Mammary epithelial cell (primary cell): ENCODE measurements at regions of chr16 and their contacts with region 1.

Region 1: DNA sequence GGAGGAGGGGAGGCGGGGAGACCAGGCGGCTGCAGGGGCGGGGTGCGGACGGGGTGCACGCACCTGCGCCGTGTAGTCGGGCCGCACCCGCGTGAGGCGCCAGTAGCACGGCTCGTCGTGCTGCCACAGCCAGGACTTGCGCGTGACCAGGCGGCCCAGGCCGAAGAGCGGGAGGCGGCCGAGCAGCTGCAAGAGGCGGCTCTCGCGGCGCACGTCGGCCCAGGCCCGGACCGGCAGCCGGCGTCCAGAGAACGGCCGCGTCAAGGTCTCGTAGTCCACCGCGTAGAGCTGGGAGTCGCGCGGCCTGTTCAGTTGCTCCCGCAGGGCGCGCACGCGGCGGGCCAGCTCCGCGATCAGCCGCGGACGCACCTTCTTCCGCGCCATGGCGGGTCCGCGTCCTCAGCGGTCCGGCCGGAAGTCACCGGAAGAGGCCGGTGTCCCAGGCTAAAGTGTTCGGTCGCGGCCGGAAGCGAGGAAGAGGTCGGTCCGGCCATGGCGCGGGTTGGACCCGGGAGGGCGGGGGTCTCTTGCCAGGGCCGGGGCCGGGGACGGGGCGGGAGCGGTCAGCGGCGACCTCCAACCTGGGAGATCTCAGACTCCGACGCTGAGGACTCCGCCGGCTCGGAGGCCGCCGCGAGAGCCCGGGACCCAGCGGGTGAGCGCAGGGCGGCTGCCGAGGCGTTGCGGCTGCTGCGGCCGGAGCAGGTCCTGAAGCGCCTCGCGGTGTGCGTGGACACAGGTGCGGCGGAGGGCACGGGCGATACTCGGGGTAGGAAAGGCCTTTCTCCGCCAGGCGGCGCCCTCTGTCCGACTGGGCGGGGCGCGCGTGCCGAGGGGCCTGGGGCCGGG is at the starts of genes EME2 and MRPS34:
- DNase-seq: peak; percentile 83
- H3K4me3 ChIP-seq: peak within 1 kb of the TSS; percentile 69 to 82 (median 70)
- H3K27ac ChIP-seq: peak within 1 kb of the TSS; percentile 3
- H3K4me1 ChIP-seq: peaks cover 31% of the 10 kb centered on the region
- H3K27me3 ChIP-seq: no peaks in the 10 kb centered on the region
- CTCF ChIP-seq: peak; percentile 45 to 77
- total RNA-seq, gene EME2: 17.2 to 29.0 TPM
- total RNA-seq, gene MRPS34: 34.7 to 99.4 TPM

Region 2: GRCh38 chr16:1428511-1428910 is 344.4 kb before region 1 on chr16:
- CTCF ChIA-PET with region 1: no interaction called
- dilution Hi-C with region 1: no loop called
- in situ Hi-C with region 1: no loop called
- intact Hi-C with region 1: loop called (anchors 5 kb)
- DNase-seq: no peak
- H3K4me3 ChIP-seq: peak overlapping the region; percentile 27 to 63 (median 43)
- H3K27ac ChIP-seq: no peak overlapping the region
- H3K4me1 ChIP-seq: peaks cover 25% of the 10 kb centered on the region
- H3K27me3 ChIP-seq: no peaks in the 10 kb centered on the region
- CTCF ChIP-seq: peak; percentile 52 to 81

Region 3: DNA sequence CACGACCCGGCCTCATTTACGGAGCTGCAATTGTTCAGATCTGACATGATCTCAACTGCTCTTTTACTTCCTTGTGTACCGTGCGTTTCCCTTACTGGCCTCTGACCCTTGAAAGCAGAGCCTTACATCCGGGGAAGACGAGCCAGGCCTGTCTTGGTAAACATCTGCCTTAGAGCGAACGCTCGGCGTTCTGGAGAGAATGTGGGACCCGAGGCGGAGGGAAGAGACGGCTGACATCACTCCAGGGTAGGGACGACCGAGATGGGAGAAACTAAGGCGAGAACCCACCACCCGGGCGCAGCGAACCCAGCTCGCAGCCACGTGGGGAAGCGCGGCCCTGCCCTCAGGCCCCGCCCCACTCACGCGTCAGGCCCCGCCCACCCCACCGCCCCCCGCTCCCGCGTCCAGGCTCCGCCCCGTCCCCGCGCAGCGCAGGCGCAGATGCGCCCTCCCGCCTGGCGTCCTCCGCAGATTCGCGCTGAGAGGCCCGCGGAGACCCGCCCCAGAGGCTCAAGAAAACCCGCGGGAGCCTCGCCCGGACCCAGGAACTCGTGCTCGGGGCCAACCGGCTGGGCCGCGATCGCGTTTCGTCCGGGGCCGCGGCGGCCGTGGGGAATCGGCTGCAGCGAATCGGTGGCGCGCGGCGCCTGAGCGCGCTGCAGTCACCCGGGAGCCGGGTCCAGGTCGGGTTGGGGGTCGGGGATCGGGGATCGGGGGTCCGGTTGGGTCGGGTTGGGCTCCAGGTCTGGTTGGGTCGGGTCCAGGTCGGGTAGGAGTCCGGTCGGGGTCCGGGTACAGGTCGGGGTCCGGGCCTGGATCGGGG is 279.8 kb before region 1 on chr16 and contains the start of gene TELO2:
- CTCF ChIA-PET with region 1: no interaction called
- dilution Hi-C with region 1: no loop called
- in situ Hi-C with region 1: no loop called
- intact Hi-C with region 1: loop called (anchors 5 kb)
- DNase-seq: peak; percentile 72
- H3K4me3 ChIP-seq: peak within 1 kb of the TSS; percentile 77 to 84 (median 82)
- H3K27ac ChIP-seq: peak within 1 kb of the TSS; percentile 41
- H3K4me1 ChIP-seq: peaks cover 21% of the 10 kb centered on the region
- H3K27me3 ChIP-seq: no peaks in the 10 kb centered on the region
- CTCF ChIP-seq: no peak
- total RNA-seq, gene TELO2: 12.7 to 37.7 TPM

Region 4: DNA sequence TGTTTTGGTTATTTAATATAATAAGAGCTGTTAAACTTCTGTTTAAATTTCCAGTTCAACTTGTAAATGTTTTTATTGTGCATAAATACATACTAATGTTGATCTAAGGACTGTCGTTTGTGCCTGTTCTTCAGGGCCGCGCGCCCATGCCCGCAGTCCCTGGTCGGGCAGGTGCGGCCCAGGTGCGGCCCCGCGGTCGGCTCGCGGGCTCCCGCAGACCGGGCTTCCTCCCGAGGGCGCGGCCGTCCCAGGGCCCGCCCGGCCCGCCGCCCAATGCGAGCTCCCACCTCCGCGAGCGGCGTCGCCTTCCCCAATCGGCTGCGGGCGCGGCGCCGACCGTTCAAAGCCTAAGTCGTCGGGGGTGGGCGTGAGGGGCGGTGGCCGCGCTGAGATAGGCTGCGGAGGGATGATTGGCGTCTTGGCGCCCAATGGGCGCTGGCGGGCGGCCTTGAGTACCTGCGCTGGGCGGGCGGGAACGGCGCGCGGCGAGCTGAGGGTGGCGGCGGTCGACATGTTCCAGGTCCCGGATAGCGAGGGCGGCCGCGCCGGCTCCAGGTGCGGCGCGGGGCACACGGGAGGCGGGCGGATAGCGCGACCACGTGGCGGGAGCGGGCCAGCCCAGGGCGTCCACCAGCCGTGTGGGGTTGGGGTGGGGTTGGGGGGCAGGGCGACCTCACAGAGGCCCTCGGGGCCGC is 95.0 kb before region 1 on chr16 and contains the start of gene JPT2:
- CTCF ChIA-PET with region 1: no interaction called
- dilution Hi-C with region 1: no loop called
- in situ Hi-C with region 1: no loop called
- intact Hi-C with region 1: loop called (anchors 2 kb)
- DNase-seq: peak; percentile 98
- H3K4me3 ChIP-seq: peak within 1 kb of the TSS; percentile 79 to 97 (median 97)
- H3K27ac ChIP-seq: peak within 1 kb of the TSS; percentile 88
- H3K4me1 ChIP-seq: peaks cover 33% of the 10 kb centered on the region
- H3K27me3 ChIP-seq: no peaks in the 10 kb centered on the region
- CTCF ChIP-seq: no peak
- total RNA-seq, gene JPT2: 53.0 to 117 TPM

Region 5: GRCh38 chr16:1691276-1691675 is 81.7 kb before region 1 on chr16:
- CTCF ChIA-PET with region 1: no interaction called
- dilution Hi-C with region 1: no loop called
- in situ Hi-C with region 1: no loop called
- intact Hi-C with region 1: loop called (anchors 5 kb)
- DNase-seq: peak; percentile 75
- H3K4me3 ChIP-seq: no peak overlapping the region
- H3K27ac ChIP-seq: peak overlapping the region; percentile 97
- H3K4me1 ChIP-seq: peaks cover 56% of the 10 kb centered on the region
- H3K27me3 ChIP-seq: no peaks in the 10 kb centered on the region
- CTCF ChIP-seq: peak; percentile 19 to 48

Region 6: DNA sequence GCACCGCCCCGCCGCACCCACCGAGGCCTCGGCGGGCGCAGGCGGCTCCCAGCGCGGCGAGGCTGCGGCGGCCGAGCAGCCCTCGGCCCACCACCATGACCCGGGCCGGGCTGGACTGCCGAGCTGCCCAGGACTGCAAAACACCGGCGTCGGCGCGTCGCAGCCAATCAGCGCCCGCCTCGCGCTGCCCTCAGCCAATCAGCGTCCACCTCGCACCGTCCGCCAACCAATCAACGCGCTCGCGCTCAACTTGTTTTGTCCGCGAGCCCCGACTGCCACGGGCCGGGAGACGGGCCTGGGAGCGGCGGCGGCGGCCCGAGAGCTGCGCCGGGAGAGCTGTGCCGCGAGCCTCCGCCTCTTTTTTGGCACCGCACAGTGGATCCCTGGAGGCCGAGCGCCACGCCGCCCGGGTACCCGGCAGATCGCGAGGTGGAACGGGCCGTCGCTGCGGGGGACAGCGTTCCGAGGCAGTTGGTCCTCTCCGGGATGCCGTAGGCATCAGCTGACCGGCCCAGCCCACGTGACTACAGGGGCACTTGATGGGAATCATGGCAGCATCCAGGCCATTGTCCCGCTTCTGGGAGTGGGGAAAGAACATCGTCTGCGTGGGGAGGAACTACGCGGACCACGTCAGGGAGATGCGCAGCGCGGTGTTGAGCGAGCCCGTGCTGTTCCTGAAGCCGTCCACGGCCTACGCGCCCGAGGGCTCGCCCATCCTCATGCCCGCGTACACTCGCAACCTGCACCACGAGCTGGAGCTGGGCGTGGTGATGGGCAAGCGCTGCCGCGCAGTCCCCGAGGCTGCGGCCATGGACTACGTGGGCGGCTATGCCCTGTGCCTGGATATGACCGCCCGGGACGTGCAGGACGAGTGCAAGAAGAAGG is 54.0 kb after region 1 on chr16 and contains the starts of genes FAHD1 and HAGH:
- CTCF ChIA-PET with region 1: no interaction called
- dilution Hi-C with region 1: no loop called
- in situ Hi-C with region 1: no loop called
- intact Hi-C with region 1: loop called (anchors 1 kb)
- DNase-seq: peak; percentile 94
- H3K4me3 ChIP-seq: peak within 1 kb of the TSS; percentile 87 to 99 (median 97)
- H3K27ac ChIP-seq: peak within 1 kb of the TSS; percentile 61
- H3K4me1 ChIP-seq: peaks cover 22% of the 10 kb centered on the region
- H3K27me3 ChIP-seq: no peaks in the 10 kb centered on the region
- CTCF ChIP-seq: no peak
- total RNA-seq, gene FAHD1: 33.1 to 61.3 TPM
- total RNA-seq, gene HAGH: 38.7 to 43.8 TPM

Region 7: GRCh38 chr16:1942810-1943726 is 170.1 kb after region 1 on chr16 and contains the start of gene MSRB1:
- CTCF ChIA-PET with region 1: no interaction called
- dilution Hi-C with region 1: no loop called
- in situ Hi-C with region 1: no loop called
- intact Hi-C with region 1: no loop called
- DNase-seq: peak; percentile 97
- H3K4me3 ChIP-seq: peak within 1 kb of the TSS; percentile 58 to 87 (median 78)
- H3K27ac ChIP-seq: no peak within 1 kb of the TSS
- H3K4me1 ChIP-seq: peaks cover 17% of the 10 kb centered on the region
- H3K27me3 ChIP-seq: no peaks in the 10 kb centered on the region
- CTCF ChIP-seq: no peak
- total RNA-seq, gene MSRB1: 19.2 to 22.0 TPM